WTC11 (cell line): ENCODE measurements at regions of chr2 and their contacts with region 1.

Region 1: DNA sequence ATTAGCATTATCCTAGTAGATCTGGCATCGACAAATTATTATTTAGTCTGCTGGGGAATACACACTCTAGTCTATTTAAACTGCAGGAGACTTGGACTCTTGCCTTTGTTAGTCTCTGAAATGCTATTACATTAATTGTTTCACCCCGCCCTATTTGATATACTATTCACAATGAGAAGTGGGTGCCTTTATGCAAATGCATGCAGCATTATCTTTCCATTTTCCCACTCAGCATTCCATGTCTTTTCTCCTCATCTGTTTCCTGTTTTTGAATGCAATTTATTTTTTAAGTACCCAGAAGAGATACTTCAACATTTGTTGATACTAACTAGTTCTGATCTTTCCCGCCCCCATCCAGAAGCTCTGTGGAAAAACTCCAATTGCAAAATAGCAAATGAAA is 395.3 kb upstream of the NXPH2 start:
- DNase-seq: no peak
- ATAC-seq: no peak
- H3K4me3 Mint-ChIP-seq: no peak overlapping the region
- H3K27ac Mint-ChIP-seq: no peak overlapping the region
- H3K4me1 Mint-ChIP-seq: peaks cover 4% of the 10 kb centered on the region; the same call in 1 of the 2 replicates
- H3K27me3 Mint-ChIP-seq: no peaks in the 10 kb centered on the region
- CTCF ChIP-seq: no peak

Region 2: GRCh38 chr2:138997849-138998517 is 177.5 kb before region 1 on chr2:
- CTCF ChIA-PET with region 1: no interaction called
- POLR2A ChIA-PET with region 1: interaction called, 10 read pairs
- DNase-seq: no peak
- ATAC-seq: no peak
- H3K4me3 Mint-ChIP-seq: no peak overlapping the region
- H3K27ac Mint-ChIP-seq: no peak overlapping the region
- H3K4me1 Mint-ChIP-seq: peaks cover 15% of the 10 kb centered on the region
- H3K27me3 Mint-ChIP-seq: no peaks in the 10 kb centered on the region
- CTCF ChIP-seq: no peak

Region 3: DNA sequence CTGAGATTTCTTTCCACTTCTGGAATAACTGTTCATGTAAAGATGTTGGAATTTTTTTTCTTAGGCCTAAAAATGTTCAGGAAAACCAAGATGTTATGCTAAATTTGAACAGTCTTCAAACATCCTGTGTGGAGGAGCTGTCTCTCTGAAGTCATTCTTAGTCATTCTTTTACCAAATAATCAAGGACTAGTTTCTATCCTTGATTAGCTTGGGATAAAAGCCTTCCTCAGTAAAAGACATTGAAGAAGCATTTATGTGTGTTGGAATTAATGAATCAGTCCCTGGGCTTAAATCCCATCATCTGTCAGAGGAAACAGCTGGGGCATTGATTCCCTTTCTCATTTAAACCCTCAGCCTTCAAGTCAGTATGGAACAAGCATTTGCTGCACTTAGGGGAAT is 95.3 kb before region 1 on chr2:
- CTCF ChIA-PET with region 1: no interaction called
- POLR2A ChIA-PET with region 1: no interaction called
- DNase-seq: no peak
- ATAC-seq: no peak
- H3K4me3 Mint-ChIP-seq: no peak overlapping the region
- H3K27ac Mint-ChIP-seq: no peak overlapping the region
- H3K4me1 Mint-ChIP-seq: peaks cover 17% of the 10 kb centered on the region
- H3K27me3 Mint-ChIP-seq: no peaks in the 10 kb centered on the region
- CTCF ChIP-seq: no peak

Region 4: DNA sequence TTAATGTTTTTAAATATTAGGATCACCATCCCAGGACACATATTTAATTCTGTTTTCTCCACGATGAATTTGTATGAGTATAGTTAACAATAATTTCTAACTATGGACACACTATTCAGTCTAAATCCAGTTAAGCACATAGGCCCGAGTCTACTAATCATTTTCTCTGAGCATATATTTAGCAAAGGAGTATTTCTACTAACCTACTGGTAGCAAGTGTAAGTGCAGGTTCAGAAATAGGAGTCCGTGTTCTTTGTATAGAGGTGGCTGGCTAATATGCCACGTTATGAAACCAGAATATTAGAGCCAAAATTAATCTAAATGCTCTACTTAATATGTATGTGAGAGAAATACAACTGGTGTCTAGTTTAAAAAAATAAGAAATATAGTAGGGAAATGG is 21.2 kb after region 1 on chr2:
- CTCF ChIA-PET with region 1: no interaction called
- POLR2A ChIA-PET with region 1: no interaction called
- DNase-seq: no peak
- ATAC-seq: no peak
- H3K4me3 Mint-ChIP-seq: no peak overlapping the region
- H3K27ac Mint-ChIP-seq: no peak overlapping the region
- H3K4me1 Mint-ChIP-seq: no peaks in the 10 kb centered on the region
- H3K27me3 Mint-ChIP-seq: no peaks in the 10 kb centered on the region
- CTCF ChIP-seq: no peak